Calu3 (cell line): ENCODE measurements at regions of chr12 and their contacts with region 1.

Region 1: GRCh38 chr12:38149395-38150286 is 166.9 kb upstream of the ALG10B start:
- DNase-seq: peak; percentile 79
- H3K4me3 Mint-ChIP-seq: peak overlapping the region; percentile 47
- H3K27ac Mint-ChIP-seq: peak overlapping the region; percentile 85
- H3K4me1 Mint-ChIP-seq: peaks cover 43% of the 10 kb centered on the region
- H3K27me3 Mint-ChIP-seq: no peaks in the 10 kb centered on the region
- CTCF ChIP-seq: no peak

Region 2: DNA sequence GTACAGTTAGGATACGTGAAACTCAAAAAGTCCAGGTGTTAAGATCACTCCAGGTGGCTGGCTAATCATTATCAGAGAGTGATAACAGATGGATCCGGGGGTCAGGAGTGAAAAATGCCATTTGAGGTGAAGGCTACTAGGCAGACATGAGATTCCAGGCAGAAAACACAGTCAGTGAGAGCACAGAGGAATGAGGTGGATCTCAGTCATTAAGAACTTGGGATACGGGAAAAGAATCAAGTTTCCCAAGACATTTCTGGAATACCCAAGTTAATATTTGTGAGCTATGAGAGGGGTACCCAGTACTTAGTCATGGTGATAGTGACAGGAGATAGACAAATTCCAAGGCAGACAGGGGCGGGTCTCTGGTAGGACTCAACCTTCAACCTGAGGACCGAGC is 72.4 kb after region 1 on chr12:
- CTCF ChIA-PET with region 1: no interaction called
- intact Hi-C with region 1: loop called (anchors 2 kb)
- DNase-seq: no peak
- H3K4me3 Mint-ChIP-seq: peak overlapping the region; percentile 46
- H3K27ac Mint-ChIP-seq: peak overlapping the region; percentile 71
- H3K4me1 Mint-ChIP-seq: peaks cover 21% of the 10 kb centered on the region
- H3K27me3 Mint-ChIP-seq: no peaks in the 10 kb centered on the region
- CTCF ChIP-seq: no peak

Region 3: DNA sequence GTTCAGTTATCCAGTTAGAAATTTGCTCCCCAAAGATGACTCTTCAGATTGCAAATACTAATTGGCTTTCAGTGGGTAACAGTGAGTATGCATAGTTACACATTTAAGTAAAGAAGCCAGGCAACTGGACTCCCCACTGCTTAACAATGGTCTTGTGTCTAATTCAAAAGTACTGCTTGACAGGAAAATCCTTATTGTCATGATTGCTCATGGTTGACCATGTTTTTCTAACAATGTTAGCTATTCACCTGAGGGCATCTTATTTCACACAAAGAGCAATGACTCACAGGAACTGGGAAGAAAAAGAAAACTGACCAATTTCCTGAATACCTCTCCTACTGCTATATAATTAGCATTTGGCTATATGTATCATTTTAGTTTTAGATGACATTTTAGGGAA is 133.2 kb after region 1 on chr12:
- CTCF ChIA-PET with region 1: interaction called, 3 read pairs
- intact Hi-C with region 1: loop called (anchors 2 kb)
- DNase-seq: peak; percentile 34
- H3K4me3 Mint-ChIP-seq: no peak overlapping the region
- H3K27ac Mint-ChIP-seq: peak overlapping the region; percentile 96
- H3K4me1 Mint-ChIP-seq: peaks cover 35% of the 10 kb centered on the region
- H3K27me3 Mint-ChIP-seq: no peaks in the 10 kb centered on the region
- CTCF ChIP-seq: no peak

Region 4: DNA sequence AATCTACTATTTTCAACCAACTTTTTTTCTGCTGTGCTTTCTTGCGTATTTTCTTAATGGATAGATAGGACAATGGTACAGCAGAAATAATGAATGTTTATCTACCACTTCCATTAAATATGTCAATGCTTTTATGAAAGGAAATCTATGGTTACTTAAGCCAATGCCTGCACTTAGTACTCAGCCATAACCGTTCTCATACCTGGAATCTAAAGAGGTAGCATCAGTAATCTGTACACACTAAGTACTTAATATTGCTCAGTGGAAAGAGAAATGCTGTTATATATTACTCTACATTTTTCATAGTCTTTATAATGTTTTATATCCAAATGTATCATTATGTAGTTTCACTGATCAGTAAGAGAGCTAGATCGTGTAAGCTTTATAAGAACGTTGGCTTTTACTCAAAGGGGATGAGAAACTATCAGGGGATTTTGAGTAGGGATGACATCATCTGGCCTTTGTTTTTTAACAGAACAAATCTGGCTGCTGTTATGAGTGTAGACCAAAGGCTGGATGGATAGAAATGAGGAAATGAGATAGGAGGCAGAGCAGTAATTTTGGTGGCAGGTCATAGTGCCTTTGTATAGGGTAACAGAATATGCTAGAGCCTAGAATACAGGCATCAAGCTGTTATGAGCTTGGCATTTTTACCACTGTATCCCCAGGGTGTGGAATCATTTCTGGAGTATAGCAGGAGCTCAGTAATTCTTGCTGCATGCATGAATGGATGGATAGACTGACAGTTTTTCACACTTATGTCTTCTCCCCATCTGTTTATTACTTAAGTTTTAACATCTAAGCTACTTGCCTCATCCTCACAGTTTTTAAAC is 200.9 kb after region 1 on chr12:
- CTCF ChIA-PET with region 1: no interaction called
- intact Hi-C with region 1: no loop called
- DNase-seq: no peak
- H3K4me3 Mint-ChIP-seq: no peak overlapping the region
- H3K27ac Mint-ChIP-seq: no peak overlapping the region
- H3K4me1 Mint-ChIP-seq: no peaks in the 10 kb centered on the region
- H3K27me3 Mint-ChIP-seq: no peaks in the 10 kb centered on the region
- CTCF ChIP-seq: no peak